IMR-90 (cell line): ENCODE measurements at regions of chr11 and their contacts with region 1.

Region 1: DNA sequence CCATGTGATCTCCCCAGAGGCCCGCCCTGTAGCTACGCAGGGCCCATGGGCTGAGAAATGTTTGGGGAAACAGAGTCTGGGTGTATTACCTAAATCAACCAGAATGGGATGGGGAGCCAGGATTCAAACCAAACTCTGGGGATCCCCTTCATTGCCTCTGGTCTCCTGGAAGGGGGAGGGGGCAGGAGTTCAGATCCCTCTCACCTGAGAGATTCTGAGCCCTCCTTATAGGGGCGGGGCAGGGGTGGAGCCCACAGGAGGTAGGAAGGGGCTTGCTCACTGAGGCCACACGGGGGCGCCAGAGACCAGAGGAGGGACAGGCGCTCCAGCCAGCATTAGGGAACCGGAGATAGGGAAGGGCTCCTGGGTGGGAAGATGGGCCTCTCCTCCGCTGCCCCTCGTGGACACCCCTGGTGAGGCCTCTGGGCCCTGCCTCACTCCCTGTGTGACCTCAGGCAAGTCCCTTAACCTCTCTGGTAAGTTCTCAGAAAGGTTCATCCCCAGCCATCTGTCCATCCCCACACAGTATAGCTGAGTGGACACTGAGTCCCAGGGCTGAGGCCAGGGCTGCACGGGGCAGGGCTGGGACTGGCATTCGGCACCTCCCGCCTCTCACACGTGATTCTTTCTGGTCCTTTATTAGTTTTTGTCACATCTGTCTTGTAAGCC is 2.7 kb upstream of the CDC42BPG start:
- DNase-seq: peak; percentile 80
- ATAC-seq: peak; percentile 84
- H3K4me3 ChIP-seq: no peak overlapping the region
- H3K27ac ChIP-seq: no peak overlapping the region
- H3K4me1 ChIP-seq: peaks cover 20% of the 10 kb centered on the region
- H3K27me3 ChIP-seq: no peaks in the 10 kb centered on the region
- CTCF ChIP-seq: peak; percentile 97
- POLR2A ChIP-seq: peak; percentile 61
- RAD21 ChIP-seq: peak; percentile 98

Region 2: GRCh38 chr11:63229815-63230214 is 1617.3 kb before region 1 on chr11:
- CTCF ChIA-PET with region 1: no interaction called
- POLR2A ChIA-PET with region 1: no interaction called
- dilution Hi-C with region 1: no loop called
- in situ Hi-C with region 1: no loop called
- intact Hi-C with region 1: no loop called
- DNase-seq: no peak
- ATAC-seq: no peak
- H3K4me3 ChIP-seq: no peak overlapping the region
- H3K27ac ChIP-seq: no peak overlapping the region
- H3K4me1 ChIP-seq: no peaks in the 10 kb centered on the region
- H3K27me3 ChIP-seq: no peaks in the 10 kb centered on the region
- CTCF ChIP-seq: no peak
- POLR2A ChIP-seq: no peak
- RAD21 ChIP-seq: no peak

Region 3: DNA sequence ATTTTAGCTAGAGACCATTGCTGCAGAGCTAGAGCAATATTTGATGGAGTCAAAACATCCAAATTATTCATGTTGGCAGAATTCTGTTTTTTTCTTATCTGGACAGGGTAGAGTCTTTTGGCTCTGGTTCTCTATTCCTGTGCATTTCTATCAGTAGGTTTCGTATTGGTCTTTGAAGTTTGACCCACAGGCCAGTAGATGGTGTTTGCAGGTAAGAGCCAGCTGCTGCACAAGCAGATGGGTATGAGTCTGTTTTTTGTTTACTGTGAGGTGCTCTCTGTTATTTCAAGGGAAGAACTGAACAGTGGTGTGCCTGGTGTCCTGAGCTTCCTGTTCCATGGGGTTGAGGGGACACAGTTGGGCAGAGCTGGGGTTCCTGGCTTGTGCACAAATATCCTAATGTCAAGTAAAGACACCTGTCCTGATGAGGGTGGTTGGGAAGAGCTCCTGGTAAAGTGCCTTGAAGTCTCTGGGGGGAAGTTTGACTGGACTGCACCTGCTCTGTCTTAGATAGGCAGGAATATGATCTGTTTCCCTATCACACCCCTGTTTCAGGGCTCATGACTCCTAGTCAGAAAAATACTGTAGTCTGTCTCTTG is 1569.7 kb before region 1 on chr11:
- CTCF ChIA-PET with region 1: no interaction called
- POLR2A ChIA-PET with region 1: no interaction called
- dilution Hi-C with region 1: no loop called
- in situ Hi-C with region 1: no loop called
- intact Hi-C with region 1: no loop called
- DNase-seq: no peak
- ATAC-seq: no peak
- H3K4me3 ChIP-seq: no peak overlapping the region
- H3K27ac ChIP-seq: no peak overlapping the region
- H3K4me1 ChIP-seq: no peaks in the 10 kb centered on the region
- H3K27me3 ChIP-seq: no peaks in the 10 kb centered on the region
- CTCF ChIP-seq: no peak
- POLR2A ChIP-seq: no peak
- RAD21 ChIP-seq: no peak

Region 4: GRCh38 chr11:64878494-64879243 is 31.5 kb after region 1 on chr11 and contains the start of gene EHD1:
- CTCF ChIA-PET with region 1: interaction called, 12 read pairs
- POLR2A ChIA-PET with region 1: interaction called, 6 read pairs
- dilution Hi-C with region 1: no loop called
- in situ Hi-C with region 1: no loop called
- intact Hi-C with region 1: loop called (anchors 1 kb)
- DNase-seq: peak; percentile 96
- ATAC-seq: peak; percentile 93
- H3K4me3 ChIP-seq: peak within 1 kb of the TSS; percentile 95
- H3K27ac ChIP-seq: peak within 1 kb of the TSS; percentile 84
- H3K4me1 ChIP-seq: peaks cover 15% of the 10 kb centered on the region
- H3K27me3 ChIP-seq: no peaks in the 10 kb centered on the region
- CTCF ChIP-seq: peak; percentile 80
- POLR2A ChIP-seq: peak; percentile 100
- RAD21 ChIP-seq: peak; percentile 43
- total RNA-seq, gene EHD1: 107 and 125 TPM in 2 replicates

Region 5: DNA sequence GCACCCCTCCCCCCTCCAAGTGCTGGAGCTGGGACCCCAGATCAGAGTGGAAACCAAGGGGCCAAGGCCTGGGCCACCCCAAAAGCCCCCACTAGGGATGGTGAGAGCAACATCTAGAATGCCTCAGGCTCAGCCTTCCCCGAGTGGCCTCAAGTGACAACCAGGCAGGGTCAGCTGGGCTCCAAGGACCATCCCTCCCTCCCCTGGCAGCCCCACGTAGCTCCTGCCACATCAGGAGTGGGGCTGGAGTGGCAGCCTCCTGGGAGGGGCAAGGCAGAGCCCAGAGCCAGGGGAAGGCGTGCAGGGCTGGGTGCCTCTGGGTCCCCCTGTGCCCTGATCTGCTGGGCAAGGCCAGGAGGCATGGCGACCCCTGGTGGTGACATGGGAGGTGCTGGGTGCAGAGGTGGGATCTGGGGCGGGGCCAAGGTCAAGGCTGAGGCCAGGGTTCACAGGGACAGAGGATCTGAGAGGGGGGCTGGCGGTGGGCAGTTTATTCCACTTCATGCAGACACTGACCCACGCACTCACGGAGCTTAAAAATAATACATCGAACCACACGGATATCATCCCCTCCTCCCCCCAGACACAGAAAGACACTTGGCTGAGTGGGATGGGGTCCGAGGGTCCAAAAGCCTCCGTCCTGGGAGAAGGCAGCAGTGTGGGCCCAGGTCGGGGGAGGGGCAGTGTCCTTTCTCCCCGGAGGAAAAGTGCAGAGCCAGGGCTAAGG is 47.1 kb after region 1 on chr11:
- CTCF ChIA-PET with region 1: interaction called, 14 read pairs
- POLR2A ChIA-PET with region 1: no interaction called
- dilution Hi-C with region 1: no loop called
- in situ Hi-C with region 1: loop called (anchors 5 kb)
- intact Hi-C with region 1: loop called (anchors 1 kb)
- DNase-seq: peak; percentile 51
- ATAC-seq: peak; percentile 93
- H3K4me3 ChIP-seq: no peak overlapping the region
- H3K27ac ChIP-seq: no peak overlapping the region
- H3K4me1 ChIP-seq: no peaks in the 10 kb centered on the region
- H3K27me3 ChIP-seq: no peaks in the 10 kb centered on the region
- CTCF ChIP-seq: peak; percentile 89
- POLR2A ChIP-seq: no peak
- RAD21 ChIP-seq: peak; percentile 85

Region 6: GRCh38 chr11:64996710-64997380 is 149.7 kb after region 1 on chr11 and contains the start of gene BATF2:
- CTCF ChIA-PET with region 1: interaction called, 4 read pairs
- POLR2A ChIA-PET with region 1: no interaction called
- dilution Hi-C with region 1: no loop called
- in situ Hi-C with region 1: loop called (anchors 10 kb)
- intact Hi-C with region 1: loop called (anchors 5 kb)
- DNase-seq: peak; percentile 83
- ATAC-seq: peak; percentile 97
- H3K4me3 ChIP-seq: peak within 1 kb of the TSS; percentile 24
- H3K27ac ChIP-seq: peak within 1 kb of the TSS; percentile 2; the same call in 1 of the 2 replicates
- H3K4me1 ChIP-seq: 0 out of 2 replicates have a peak, but pooled peaks cover 4% of the 10 kb centered on the region
- H3K27me3 ChIP-seq: no peaks in the 10 kb centered on the region
- CTCF ChIP-seq: peak; percentile 64
- POLR2A ChIP-seq: no peak
- RAD21 ChIP-seq: peak; percentile 64
- total RNA-seq, gene BATF2: 0.36 and 0.56 TPM in 2 replicates

Region 7: DNA sequence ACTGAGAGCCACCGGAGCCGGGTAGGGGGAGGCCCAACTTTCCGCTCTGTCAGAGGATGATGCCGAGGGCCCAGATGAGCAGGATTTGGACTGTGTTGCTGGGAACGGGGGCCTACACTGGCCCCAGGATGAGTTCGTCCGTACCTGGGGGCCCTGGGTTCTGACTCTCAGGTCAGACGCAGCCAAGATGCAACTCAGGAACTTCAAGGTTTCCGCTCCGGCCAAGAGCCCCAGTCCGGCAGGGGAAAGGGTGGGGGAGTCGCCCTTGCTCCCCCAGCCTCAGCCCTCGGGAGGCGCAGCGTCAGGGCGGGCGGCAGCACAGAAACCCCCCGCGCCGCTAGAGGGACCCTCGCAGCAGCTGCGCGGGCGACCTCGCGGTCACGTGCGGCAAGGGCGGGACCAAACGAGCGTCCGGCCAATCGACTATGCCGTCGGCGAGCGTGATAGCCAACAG is 166.6 kb after region 1 on chr11:
- CTCF ChIA-PET with region 1: interaction called, 3 read pairs
- POLR2A ChIA-PET with region 1: no interaction called
- dilution Hi-C with region 1: no loop called
- in situ Hi-C with region 1: loop called (anchors 10 kb)
- intact Hi-C with region 1: loop called (anchors 1 kb)
- DNase-seq: peak; percentile 87
- ATAC-seq: peak; percentile 93
- H3K4me3 ChIP-seq: peak overlapping the region; percentile 57
- H3K27ac ChIP-seq: peak overlapping the region; percentile 83
- H3K4me1 ChIP-seq: peaks cover 5% of the 10 kb centered on the region
- H3K27me3 ChIP-seq: no peaks in the 10 kb centered on the region
- CTCF ChIP-seq: no peak
- POLR2A ChIP-seq: peak; percentile 70
- RAD21 ChIP-seq: peak; percentile 69; the same call in 1 of the 2 replicates